Gastrocnemius medialis (tissue), 4 donors: ENCODE measurements at regions of chr6 and their contacts with region 1.

Region 1: DNA sequence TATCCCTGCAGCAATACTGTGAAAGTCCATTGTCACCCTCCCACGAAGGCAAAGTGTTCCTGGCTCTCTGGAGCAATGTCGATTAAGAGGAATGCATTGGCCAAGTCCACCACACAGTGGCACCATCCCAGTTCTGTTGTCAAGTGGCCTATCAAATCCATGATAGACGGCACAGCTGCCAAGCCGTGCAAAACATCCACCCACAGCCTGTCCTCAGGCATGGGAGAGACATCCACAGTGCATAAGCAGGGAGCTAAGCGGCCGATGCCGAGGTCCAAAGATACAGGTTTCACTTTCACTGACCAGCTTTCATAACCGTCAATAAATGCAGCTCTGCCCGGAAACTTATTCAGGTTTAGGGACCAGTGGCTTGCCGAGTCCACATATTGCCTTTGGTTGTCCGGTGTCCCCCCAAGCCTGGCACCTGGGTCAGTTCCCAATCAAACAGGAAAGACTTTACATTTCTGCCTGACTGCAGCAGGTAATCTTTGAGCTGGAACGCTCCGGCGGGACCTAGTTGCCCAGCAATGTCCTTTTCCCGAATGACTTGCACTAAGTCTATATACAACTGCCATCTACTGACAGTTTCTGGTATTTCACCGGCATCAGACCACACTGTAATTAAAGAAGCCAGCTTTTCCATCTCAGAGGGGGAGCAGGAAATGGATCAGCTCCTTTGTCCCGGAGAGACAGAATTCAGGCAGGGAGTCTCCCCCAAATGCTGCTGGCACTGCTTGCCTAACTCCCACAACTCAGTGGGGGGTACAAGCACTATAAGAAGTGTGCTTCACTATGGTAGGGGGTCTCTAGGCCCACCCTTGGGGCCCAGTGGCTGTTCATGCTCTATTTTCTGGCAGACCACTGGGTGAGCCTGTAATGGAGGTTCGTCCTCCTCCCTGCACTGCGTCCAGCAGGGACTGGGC is 6.3 kb downstream of the ZKSCAN3 start:
- DNase-seq: peak; percentile 63 to 65
- ATAC-seq: peak; percentile 93 to 95
- H3K4me3 ChIP-seq: peak overlapping the region; percentile 60 to 75 (median 74)
- H3K27ac ChIP-seq: peak overlapping the region; percentile 76 to 83 (median 82)
- H3K4me1 ChIP-seq: peaks cover 27 to 44% of the 10 kb centered on the region in 2 donors
- H3K27me3 ChIP-seq: no peaks in the 10 kb centered on the region
- CTCF ChIP-seq: peak; percentile 79 to 91 (median 88)
- POLR2A ChIP-seq: no peak

Region 2: GRCh38 chr6:27157459-27158315 is 1198.3 kb before region 1 on chr6:
- in situ Hi-C with region 1: loop called in 1 of 4 experiments (anchors 25 kb)
- intact Hi-C with region 1: no loop called
- DNase-seq: peak in 1 of 2 donors; percentile 30
- ATAC-seq: peak; percentile 30 to 60
- H3K4me3 ChIP-seq: peak overlapping the region; percentile 41 to 51 (median 44)
- H3K27ac ChIP-seq: no peak overlapping the region
- H3K4me1 ChIP-seq: peaks cover 0 to 8% of the 10 kb centered on the region in 2 donors
- H3K27me3 ChIP-seq: peaks cover 0 to 5% (median 0%) of the 10 kb centered on the region in 3 donors
- CTCF ChIP-seq: peak in 4 of 5 experiments; percentile 25 to 36 (median 32)
- POLR2A ChIP-seq: no peak

Region 3: DNA sequence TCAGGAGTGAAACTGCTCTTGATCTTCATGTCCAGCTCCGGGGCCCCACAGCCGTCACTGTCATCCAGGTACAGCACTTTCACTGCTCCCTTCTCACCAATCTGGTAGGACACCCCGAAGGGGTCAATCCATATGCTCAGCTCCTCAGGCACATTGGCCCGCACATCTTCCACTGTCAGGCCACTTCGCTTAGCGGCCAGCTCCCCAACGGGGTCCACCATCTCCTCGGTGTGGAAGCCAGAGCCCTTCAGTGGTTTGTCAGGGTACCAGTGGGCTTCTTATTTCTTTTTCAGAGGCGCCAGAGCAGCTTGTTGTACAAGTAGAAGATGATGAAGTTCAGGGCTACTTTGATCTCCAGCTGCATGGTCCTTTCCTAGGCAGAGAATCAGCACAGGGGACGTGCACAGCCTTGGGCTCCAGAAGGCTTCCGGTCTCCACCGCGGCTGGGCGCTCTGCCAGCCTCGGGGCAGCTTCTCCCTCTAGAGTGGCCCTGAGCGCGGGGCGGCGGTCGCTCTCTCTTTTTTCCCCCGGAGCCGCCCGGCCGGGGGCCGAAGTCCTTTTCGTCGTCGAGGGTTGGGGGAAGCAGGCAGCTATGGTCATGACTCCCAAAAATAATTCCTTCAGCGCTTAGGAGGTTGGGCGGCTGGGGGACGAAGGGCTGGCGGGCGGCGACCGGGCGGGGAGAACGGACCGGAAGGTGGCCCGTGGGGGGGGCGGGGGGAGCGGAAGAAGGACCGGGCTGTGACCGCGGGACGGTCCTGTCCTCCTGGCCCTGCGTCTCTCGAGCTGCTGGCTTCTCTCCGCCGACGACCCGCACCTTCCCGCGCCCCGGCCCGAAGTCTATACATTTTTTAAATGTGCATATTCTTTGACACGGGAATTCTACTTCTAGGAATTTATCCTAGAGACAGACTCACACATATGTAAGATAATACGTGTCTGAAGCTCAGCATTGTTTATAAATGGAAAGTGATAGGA is 137.4 kb before region 1 on chr6:
- in situ Hi-C with region 1: no loop called
- intact Hi-C with region 1: loop called (anchors 1 kb)
- DNase-seq: peak; percentile 58 to 76
- ATAC-seq: peak; percentile 92 to 95
- H3K4me3 ChIP-seq: peak overlapping the region; percentile 65 to 82 (median 76)
- H3K27ac ChIP-seq: peak overlapping the region; percentile 81 to 89 (median 84)
- H3K4me1 ChIP-seq: peaks cover 8 to 22% of the 10 kb centered on the region in 2 donors
- H3K27me3 ChIP-seq: peaks cover 12 to 35% (median 16%) of the 10 kb centered on the region in 3 donors
- CTCF ChIP-seq: no peak
- POLR2A ChIP-seq: peak in 1 of 2 donors; percentile 20

Region 4: GRCh38 chr6:28252009-28252975 is 103.7 kb before region 1 on chr6 and contains the start of gene ZKSCAN4:
- in situ Hi-C with region 1: no loop called
- intact Hi-C with region 1: loop called (anchors 1 kb)
- DNase-seq: peak; percentile 57 to 67
- ATAC-seq: peak; percentile 99 to 100
- H3K4me3 ChIP-seq: peak within 1 kb of the TSS; percentile 72 to 94 (median 90)
- H3K27ac ChIP-seq: peak within 1 kb of the TSS; percentile 44 to 53 (median 49)
- H3K4me1 ChIP-seq: peaks cover 9 to 15% of the 10 kb centered on the region in 2 donors
- H3K27me3 ChIP-seq: peaks cover 0 to 3% (median 0%) of the 10 kb centered on the region in 3 donors
- CTCF ChIP-seq: no peak
- POLR2A ChIP-seq: no peak
- total RNA-seq, gene ZKSCAN4: 0.82 to 3.3 (median 1.1) TPM

Region 5: GRCh38 chr6:28315628-28316027 is 40.4 kb before region 1 on chr6:
- in situ Hi-C with region 1: no loop called
- intact Hi-C with region 1: no loop called
- DNase-seq: no peak
- ATAC-seq: no peak
- H3K4me3 ChIP-seq: no peak overlapping the region
- H3K27ac ChIP-seq: no peak overlapping the region
- H3K4me1 ChIP-seq: no peaks in the 10 kb centered on the region
- H3K27me3 ChIP-seq: no peaks in the 10 kb centered on the region
- CTCF ChIP-seq: no peak
- POLR2A ChIP-seq: no peak

Region 6: DNA sequence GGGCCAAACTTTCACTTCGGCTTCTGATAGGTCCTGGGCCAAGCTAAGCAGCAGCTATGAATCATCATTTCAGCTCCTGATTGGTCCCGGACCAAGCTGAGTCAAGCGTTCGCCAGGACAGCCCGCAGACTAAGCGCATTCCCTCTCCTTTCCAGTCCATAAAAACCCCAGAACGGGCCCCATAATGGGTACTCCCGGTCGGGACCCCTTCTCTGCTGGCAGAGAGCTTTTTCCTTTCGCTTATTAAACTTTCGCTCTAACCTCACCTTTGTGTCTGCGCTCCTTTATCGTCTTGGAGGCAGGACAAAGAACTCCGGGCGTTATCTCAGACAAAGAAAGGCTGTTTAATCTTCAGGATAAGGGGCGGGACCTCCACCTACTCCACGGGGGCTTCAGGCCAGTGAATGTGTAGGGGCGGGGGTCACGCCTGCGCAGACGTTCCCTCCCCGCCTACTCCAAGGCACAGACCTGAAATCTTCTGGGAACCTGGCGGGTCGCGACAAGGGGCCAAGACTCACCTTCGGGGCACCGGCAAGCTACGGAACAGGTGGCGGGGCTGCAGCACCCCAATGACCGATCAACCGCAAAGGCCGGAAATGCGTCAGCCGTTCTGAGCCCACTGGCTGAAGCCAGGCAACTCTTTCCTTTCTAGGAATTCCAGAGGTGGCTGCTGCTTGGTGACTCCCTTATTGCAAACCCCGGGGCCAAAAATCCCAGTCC is 20.3 kb before region 1 on chr6 and contains the start of gene ZSCAN31:
- in situ Hi-C with region 1: no loop called
- intact Hi-C with region 1: loop called (anchors 2 kb)
- DNase-seq: peak; percentile 90 to 94
- ATAC-seq: peak; percentile 98 to 99
- H3K4me3 ChIP-seq: peak within 1 kb of the TSS; percentile 78 to 91 (median 84)
- H3K27ac ChIP-seq: peak within 1 kb of the TSS; percentile 90 to 99 (median 97)
- H3K4me1 ChIP-seq: peaks cover 11 to 13% of the 10 kb centered on the region in 2 donors
- H3K27me3 ChIP-seq: no peaks in the 10 kb centered on the region
- CTCF ChIP-seq: no peak
- POLR2A ChIP-seq: peak; percentile 64 to 78
- total RNA-seq, gene ZSCAN31: 2.4 to 14.1 (median 7.5) TPM